ENCODE measurements at regions of chr19 and their contacts with region 1.

Region 1: GRCh38 chr19:10644260-10645007 is 9.7 kb upstream of the ILF3 start:
- DNase-seq: peak; percentile 89
- H3K4me3 ChIP-seq: no peak overlapping the region
- H3K27ac ChIP-seq: peak overlapping the region; percentile 72
- H3K4me1 ChIP-seq: peaks cover 15% of the 10 kb centered on the region
- H3K27me3 ChIP-seq: no peaks in the 10 kb centered on the region
- CTCF ChIP-seq: peak; percentile 89

Region 2: GRCh38 chr19:10478903-10479384 is 165.5 kb before region 1 on chr19:
- CTCF ChIA-PET with region 1: interaction called, 11 read pairs
- POLR2A ChIA-PET with region 1: no interaction called
- intact Hi-C with region 1: no loop called
- DNase-seq: peak; percentile 96
- H3K4me3 ChIP-seq: no peak overlapping the region
- H3K27ac ChIP-seq: no peak overlapping the region
- H3K4me1 ChIP-seq: peaks cover 11% of the 10 kb centered on the region
- H3K27me3 ChIP-seq: no peaks in the 10 kb centered on the region
- CTCF ChIP-seq: peak; percentile 67

Region 3: DNA sequence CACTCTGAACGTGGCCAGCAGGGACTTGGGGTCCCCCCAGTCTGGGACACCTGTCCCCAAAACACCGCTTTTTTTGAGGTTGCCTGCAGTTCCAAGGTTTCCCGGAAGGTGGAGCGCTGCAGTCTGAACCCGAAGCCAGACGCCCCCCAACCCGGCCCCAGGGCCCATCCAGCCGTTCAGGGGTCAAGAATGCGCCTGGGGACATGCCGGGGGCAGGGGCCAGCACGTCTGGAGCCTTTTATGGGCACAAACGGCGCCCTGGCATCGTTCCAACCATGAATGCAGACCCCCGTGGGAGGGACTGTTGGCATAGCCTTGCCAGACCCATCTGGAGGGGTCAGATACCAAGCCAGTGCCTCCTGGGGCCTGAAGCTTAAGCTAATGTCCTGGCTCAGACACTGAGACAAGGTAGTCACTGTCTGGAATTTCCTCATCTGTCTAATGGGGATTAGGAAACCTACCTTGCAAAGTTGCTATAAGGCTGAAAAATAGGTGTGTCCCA is 134.1 kb before region 1 on chr19:
- CTCF ChIA-PET with region 1: interaction called, 11 read pairs
- POLR2A ChIA-PET with region 1: no interaction called
- intact Hi-C with region 1: no loop called
- DNase-seq: peak; percentile 24
- H3K4me3 ChIP-seq: no peak overlapping the region
- H3K27ac ChIP-seq: no peak overlapping the region
- H3K4me1 ChIP-seq: no peaks in the 10 kb centered on the region
- H3K27me3 ChIP-seq: peaks cover 30% of the 10 kb centered on the region
- CTCF ChIP-seq: peak; percentile 84

Region 4: GRCh38 chr19:10580979-10581631 is 63.3 kb before region 1 on chr19:
- CTCF ChIA-PET with region 1: interaction called, 75 read pairs
- POLR2A ChIA-PET with region 1: interaction called, 5 read pairs
- intact Hi-C with region 1: loop called (anchors 1 kb)
- DNase-seq: peak; percentile 95
- H3K4me3 ChIP-seq: no peak overlapping the region
- H3K27ac ChIP-seq: no peak overlapping the region
- H3K4me1 ChIP-seq: no peaks in the 10 kb centered on the region
- H3K27me3 ChIP-seq: no peaks in the 10 kb centered on the region
- CTCF ChIP-seq: peak; percentile 99

Measured in A673 (cell line).